ENCODE measurements at regions of chr6 and their contacts with region 1.

Region 1: DNA sequence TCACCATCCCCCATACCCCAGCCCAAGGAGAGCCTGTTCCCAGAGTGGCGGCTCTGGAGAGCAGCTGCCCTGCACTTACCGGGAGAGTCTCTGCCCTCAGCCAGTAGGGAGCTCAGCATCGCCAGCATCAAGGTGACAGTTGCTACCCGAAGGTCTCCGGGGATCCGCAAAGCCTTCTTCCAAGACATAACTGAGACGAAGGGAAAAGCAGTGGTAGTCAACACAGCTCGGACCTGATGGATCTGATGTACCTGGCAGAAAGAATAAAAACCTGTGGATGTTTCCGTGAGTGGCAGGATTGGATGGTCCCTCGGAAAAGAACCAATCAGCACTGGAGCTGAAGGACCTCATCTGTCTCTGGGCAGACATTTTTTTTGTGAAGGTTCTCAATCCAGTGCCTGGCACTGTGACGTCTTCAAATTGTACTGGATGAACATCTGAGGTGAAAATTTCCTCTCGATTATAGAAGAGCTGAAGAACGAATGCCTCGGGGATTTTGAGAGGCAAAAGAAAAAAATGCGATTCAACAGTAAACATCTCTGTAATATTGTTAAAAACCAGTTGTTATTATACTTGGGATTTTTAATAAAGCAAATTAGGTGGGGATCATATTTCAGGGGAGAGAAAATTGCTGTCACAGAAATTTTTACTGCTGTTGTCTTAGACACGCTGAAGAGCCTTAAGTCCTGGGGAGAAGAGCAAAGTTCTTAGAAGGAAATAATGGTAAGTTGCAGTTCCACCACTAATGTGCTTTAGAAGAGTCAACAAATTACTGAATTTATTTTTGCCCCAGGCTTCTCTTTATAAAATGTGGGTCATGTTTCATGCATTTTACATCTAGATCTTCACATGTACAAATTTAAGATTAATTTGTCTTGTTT is at the start of gene HLA-DQB1:
- DNase-seq: peak; percentile 48
- total RNA-seq, gene HLA-DQB1: not detected in 2 replicates

Region 2: DNA sequence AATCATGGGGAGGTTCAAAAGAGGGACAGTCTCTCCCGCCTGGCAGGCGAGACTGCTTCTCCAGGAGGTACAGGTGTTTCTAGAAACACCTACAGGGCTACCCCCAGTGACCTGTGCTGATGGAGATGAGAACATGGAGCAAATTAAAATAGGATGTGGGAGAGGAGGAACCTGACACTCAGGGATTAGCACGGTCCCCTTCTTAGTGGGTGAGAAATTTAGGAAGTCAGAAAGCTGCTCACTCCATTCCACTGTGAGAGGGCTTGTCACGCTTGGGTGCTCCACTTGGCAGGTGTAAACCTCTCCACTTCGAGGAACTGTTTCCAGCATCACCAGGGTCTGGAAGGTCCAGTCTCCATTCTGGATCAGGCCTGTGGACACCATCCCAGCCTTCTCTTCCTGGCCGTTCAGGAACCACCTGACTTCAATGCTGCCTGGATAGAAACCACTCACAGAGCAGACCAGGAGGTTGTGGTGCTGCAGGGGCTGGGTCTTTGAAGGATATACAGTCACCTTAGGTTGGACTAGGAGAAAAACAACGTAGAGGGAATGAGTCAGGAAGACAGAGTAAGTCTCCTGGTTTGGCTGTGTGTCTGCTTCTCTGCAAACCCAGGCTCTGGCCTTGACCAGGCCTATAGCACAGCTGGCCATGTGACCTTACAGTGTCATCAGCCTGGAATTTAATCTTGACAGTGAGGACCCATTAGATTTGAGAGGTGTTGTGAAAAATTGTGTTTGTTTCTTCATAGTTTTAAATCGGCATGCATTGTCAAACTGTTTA is 85.2 kb before region 1 on chr6:
- in situ Hi-C with region 1: no loop called
- DNase-seq: no peak

Region 3: GRCh38 chr6:32609731-32610640 is 56.7 kb before region 1 on chr6:
- in situ Hi-C with region 1: no loop called
- DNase-seq: peak; percentile 64

Region 4: DNA sequence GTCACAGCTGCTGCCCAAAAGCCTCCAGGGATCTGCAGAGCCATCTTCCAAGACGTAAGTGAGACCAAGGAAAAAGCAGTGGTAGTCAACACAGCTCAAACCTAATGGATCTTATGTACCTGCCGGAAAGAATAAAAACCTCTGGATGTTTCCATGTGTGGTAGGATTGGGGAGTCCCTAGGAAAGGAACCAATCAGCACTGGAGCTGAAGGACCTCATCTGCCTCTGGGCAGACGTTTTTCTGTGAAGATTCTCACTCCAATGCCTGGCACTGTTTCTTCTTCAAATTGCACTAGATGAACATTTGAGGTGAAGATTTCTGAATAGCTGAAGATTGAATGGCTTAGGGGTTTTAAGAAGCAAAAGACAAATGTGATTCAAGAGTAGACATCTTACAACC is 96.8 kb after region 1 on chr6 and contains the start of gene HLA-DQB2:
- in situ Hi-C with region 1: loop called (anchors 10 kb)
- DNase-seq: no peak
- total RNA-seq, gene HLA-DQB2: not detected in 2 replicates

Region 5: DNA sequence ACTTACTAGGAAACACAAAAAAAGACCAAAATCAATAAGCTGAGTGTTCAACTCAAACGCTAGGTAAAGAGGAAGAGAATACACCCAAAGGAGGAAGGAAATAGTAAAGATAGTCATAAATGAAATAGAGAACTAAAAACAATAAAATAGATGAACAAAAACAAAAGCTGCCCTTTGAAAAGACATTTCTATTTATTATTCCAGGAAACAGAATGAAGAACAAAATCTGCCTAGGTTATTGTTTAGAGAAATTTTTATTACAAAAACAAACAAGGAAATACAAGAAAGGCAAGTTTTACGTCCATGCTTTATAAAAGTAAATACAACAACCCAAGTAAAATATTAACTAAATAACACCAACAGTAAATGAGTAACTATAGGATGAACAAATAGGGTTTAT is 254.1 kb after region 1 on chr6:
- in situ Hi-C with region 1: no loop called
- DNase-seq: no peak